ENCODE measurements at regions of chr10 and their contacts with region 1.

Region 1: GRCh38 chr10:12526311-12526710 is 177.0 kb downstream of the CAMK1D start:
- DNase-seq: no peak
- H3K4me3 ChIP-seq: no peak overlapping the region
- H3K27ac ChIP-seq: no peak overlapping the region
- H3K4me1 ChIP-seq: peaks cover 3% of the 10 kb centered on the region
- H3K27me3 ChIP-seq: no peaks in the 10 kb centered on the region
- CTCF ChIP-seq: no peak
- POLR2A ChIP-seq: no peak

Region 2: GRCh38 chr10:12605580-12606405 is 79.5 kb after region 1 on chr10:
- intact Hi-C with region 1: no loop called
- DNase-seq: peak in 1 of 2 donors; percentile 86
- H3K4me3 ChIP-seq: peak overlapping the region; percentile 39 to 49
- H3K27ac ChIP-seq: peak overlapping the region; percentile 69
- H3K4me1 ChIP-seq: peaks cover 19% of the 10 kb centered on the region
- H3K27me3 ChIP-seq: no peaks in the 10 kb centered on the region
- CTCF ChIP-seq: no peak
- POLR2A ChIP-seq: no peak

Region 3: GRCh38 chr10:13016426-13016825 is 490.1 kb after region 1 on chr10:
- intact Hi-C with region 1: loop called (anchors 2 kb)
- DNase-seq: no peak
- H3K4me3 ChIP-seq: no peak overlapping the region
- H3K27ac ChIP-seq: no peak overlapping the region
- H3K4me1 ChIP-seq: no peaks in the 10 kb centered on the region
- H3K27me3 ChIP-seq: no peaks in the 10 kb centered on the region
- CTCF ChIP-seq: no peak
- POLR2A ChIP-seq: no peak

Measured in vagina (tissue), 2 donors.